Naive thymus-derived CD8-positive, alpha-beta T cell (primary cell): ENCODE measurements at regions of chr16 and their contacts with region 1.

Region 1: DNA sequence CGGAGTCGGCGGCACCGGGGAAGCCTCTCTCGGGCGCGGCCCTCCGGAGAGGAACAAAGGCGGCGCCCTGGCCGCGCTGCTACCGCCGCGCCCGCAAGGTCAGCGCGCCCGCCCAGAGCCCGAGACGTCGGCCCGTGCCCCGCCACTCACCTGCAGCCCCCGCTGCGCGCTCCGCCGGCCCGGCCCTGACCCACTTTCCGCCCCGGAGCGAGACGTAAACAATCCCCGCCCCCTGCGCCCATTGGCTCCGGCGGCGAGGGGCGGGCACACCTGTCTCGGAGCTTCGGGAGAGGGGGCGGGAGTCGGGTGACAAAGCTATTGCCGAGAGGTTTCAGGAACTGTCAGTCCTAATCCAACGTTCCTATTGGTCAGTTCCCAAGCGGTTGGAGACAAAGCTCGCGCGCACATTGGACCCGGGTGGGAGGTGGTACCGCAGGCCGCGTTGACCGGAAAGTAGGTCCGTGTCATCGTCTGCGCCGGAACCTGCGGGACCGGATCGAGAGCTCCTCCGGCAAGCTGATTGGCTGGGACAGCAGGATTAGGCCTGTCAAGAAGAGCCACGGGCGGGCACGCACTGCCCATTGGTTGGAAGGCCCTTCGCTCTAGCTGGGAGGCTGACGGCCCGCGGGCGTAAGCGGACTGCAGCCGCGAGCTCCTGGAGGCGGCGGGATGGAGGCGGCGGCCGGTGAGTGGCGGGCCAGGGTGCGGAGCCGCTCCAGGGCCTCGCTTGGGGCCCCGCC is at the starts of genes NUBP2 and SPSB3:
- DNase-seq: peak; percentile 90 to 99 (median 97)
- ATAC-seq: peak; percentile 86 to 87
- H3K4me3 Mint-ChIP-seq: peak within 1 kb of the TSS; percentile 83 to 97 (median 93)
- H3K27ac Mint-ChIP-seq: peak within 1 kb of the TSS; percentile 82 to 99 (median 93)
- H3K4me1 Mint-ChIP-seq: peaks cover 8 to 52% (median 27%) of the 10 kb centered on the region in 4 donors
- H3K27me3 Mint-ChIP-seq: no peaks in the 10 kb centered on the region
- polyA plus RNA-seq, gene NUBP2: 87.2 to 90.6 (median 87.3) TPM
- polyA plus RNA-seq, gene SPSB3: 38.0 to 42.0 (median 40.8) TPM

Region 2: GRCh38 chr16:1677802-1678496 is 104.6 kb before region 1 on chr16 and contains the start of gene JPT2:
- POLR2A ChIA-PET with region 1: interaction called, 15 read pairs
- DNase-seq: peak; percentile 91 to 97 (median 92)
- ATAC-seq: peak; percentile 96 to 98
- H3K4me3 Mint-ChIP-seq: peak within 1 kb of the TSS; percentile 79 to 91 (median 86)
- H3K27ac Mint-ChIP-seq: peak within 1 kb of the TSS; percentile 56 to 93 (median 86)
- H3K4me1 Mint-ChIP-seq: peaks cover 17 to 38% (median 30%) of the 10 kb centered on the region in 4 donors
- H3K27me3 Mint-ChIP-seq: no peaks in the 10 kb centered on the region
- polyA plus RNA-seq, gene JPT2: 9.1 to 10.3 (median 9.8) TPM

Region 3: DNA sequence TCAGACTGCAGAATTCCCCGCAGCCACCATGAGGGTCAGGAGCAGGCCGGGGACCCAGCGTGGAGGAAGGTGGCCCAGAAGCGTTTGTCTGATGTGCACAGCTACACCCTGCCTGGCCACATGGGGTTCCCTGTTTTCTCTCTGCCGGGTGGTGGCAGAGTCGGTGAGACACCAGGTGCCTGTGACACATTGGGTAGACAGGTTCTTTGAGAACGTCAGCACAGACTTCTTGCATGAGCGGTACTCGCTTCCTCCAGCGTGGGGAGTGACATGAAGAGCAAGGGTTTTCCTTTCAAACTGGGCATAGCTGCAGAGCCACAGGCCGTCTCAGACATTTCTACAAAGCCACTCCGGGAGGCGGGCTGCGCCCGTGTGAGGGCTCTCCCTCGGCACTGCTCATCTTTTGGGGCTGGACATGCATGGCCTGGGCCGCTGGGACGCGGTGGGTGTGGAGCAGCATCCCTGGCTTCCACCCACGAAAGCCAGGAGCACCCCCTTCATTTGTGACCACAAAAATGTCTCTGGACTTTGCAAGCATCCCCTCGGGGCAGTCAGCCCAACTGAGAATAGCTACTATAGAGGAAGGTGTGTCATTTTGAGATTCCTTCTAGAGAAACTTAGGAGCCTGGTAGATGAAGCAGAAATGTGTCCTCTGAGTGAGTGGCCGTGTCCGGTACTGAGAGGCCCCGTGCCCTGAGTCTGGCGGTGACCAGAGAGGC is 37.2 kb before region 1 on chr16:
- POLR2A ChIA-PET with region 1: no interaction called
- DNase-seq: no peak
- ATAC-seq: no peak
- H3K4me3 Mint-ChIP-seq: no peak overlapping the region
- H3K27ac Mint-ChIP-seq: peak overlapping the region in 1 of 10 donors; percentile 80
- H3K4me1 Mint-ChIP-seq: peaks cover 0 to 2% (median 0%) of the 10 kb centered on the region in 4 donors
- H3K27me3 Mint-ChIP-seq: no peaks in the 10 kb centered on the region

Region 4: GRCh38 chr16:1794221-1794860 is 11.8 kb after region 1 on chr16:
- POLR2A ChIA-PET with region 1: interaction called, 10 read pairs
- DNase-seq: peak in 1 of 10 donors; percentile 49
- ATAC-seq: no peak
- H3K4me3 Mint-ChIP-seq: no peak overlapping the region
- H3K27ac Mint-ChIP-seq: no peak overlapping the region
- H3K4me1 Mint-ChIP-seq: no peaks in the 10 kb centered on the region
- H3K27me3 Mint-ChIP-seq: no peaks in the 10 kb centered on the region

Region 5: DNA sequence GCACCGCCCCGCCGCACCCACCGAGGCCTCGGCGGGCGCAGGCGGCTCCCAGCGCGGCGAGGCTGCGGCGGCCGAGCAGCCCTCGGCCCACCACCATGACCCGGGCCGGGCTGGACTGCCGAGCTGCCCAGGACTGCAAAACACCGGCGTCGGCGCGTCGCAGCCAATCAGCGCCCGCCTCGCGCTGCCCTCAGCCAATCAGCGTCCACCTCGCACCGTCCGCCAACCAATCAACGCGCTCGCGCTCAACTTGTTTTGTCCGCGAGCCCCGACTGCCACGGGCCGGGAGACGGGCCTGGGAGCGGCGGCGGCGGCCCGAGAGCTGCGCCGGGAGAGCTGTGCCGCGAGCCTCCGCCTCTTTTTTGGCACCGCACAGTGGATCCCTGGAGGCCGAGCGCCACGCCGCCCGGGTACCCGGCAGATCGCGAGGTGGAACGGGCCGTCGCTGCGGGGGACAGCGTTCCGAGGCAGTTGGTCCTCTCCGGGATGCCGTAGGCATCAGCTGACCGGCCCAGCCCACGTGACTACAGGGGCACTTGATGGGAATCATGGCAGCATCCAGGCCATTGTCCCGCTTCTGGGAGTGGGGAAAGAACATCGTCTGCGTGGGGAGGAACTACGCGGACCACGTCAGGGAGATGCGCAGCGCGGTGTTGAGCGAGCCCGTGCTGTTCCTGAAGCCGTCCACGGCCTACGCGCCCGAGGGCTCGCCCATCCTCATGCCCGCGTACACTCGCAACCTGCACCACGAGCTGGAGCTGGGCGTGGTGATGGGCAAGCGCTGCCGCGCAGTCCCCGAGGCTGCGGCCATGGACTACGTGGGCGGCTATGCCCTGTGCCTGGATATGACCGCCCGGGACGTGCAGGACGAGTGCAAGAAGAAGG is 44.4 kb after region 1 on chr16 and contains the starts of genes FAHD1 and HAGH:
- POLR2A ChIA-PET with region 1: interaction called, 25 read pairs
- DNase-seq: peak; percentile 82 to 99 (median 90)
- ATAC-seq: peak; percentile 84 to 87
- H3K4me3 Mint-ChIP-seq: peak within 1 kb of the TSS; percentile 86 to 96 (median 92)
- H3K27ac Mint-ChIP-seq: peak within 1 kb of the TSS; percentile 87 to 97 (median 94)
- H3K4me1 Mint-ChIP-seq: peaks cover 17 to 59% (median 45%) of the 10 kb centered on the region in 4 donors
- H3K27me3 Mint-ChIP-seq: peaks cover 0 to 3% (median 0%) of the 10 kb centered on the region in 5 donors
- polyA plus RNA-seq, gene FAHD1: 20.3 to 34.2 (median 32.6) TPM
- polyA plus RNA-seq, gene HAGH: 38.7 to 60.0 (median 45.0) TPM